A673 (cell line): ENCODE measurements at regions of chr13 and their contacts with region 1.

Region 1: GRCh38 chr13:33679658-33680012 is 138.3 kb upstream of the RFC3 start:
- DNase-seq: no peak
- H3K4me3 ChIP-seq: no peak overlapping the region
- H3K27ac ChIP-seq: no peak overlapping the region
- H3K4me1 ChIP-seq: no peaks in the 10 kb centered on the region
- H3K27me3 ChIP-seq: no peaks in the 10 kb centered on the region
- CTCF ChIP-seq: no peak

Region 2: GRCh38 chr13:32548837-32549236 is 1130.8 kb before region 1 on chr13:
- CTCF ChIA-PET with region 1: no interaction called
- POLR2A ChIA-PET with region 1: interaction called, 14 read pairs
- intact Hi-C with region 1: no loop called
- DNase-seq: no peak
- H3K4me3 ChIP-seq: no peak overlapping the region
- H3K27ac ChIP-seq: no peak overlapping the region
- H3K4me1 ChIP-seq: no peaks in the 10 kb centered on the region
- H3K27me3 ChIP-seq: no peaks in the 10 kb centered on the region
- CTCF ChIP-seq: no peak

Region 3: DNA sequence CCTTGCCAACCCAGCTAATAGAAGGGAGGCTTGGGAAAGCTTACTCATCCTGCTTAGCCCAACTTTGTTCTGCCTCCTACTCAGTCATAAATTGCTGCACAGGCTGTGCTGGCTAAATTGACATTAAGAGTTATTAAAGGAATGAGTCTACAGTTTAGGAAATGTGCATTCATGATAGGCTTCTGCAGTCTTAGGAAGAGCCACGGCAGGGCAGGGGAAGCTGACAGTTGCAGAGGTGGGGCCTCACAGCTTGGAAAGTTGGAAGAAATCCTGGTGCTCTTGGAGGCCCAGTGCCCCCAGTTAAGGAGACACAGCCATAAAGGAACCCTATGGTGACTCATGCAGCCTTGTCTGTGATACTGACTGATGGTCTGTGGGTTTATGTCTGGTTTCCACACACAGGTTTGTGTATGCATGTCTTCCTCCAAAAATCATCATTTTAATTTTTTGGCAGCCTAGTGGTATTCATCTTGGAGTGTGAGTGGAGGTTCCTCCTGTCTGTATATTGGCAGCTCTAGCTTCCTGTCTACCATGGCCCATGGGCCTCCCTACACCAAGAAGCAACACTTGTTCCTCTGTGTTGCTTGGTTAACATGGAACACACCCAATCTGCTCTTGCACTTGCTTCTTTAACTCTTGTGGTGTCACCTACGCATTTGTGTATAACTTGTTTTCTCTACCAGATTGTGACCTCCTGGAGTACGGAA is 798.4 kb before region 1 on chr13:
- CTCF ChIA-PET with region 1: no interaction called
- POLR2A ChIA-PET with region 1: interaction called, 10 read pairs
- intact Hi-C with region 1: no loop called
- DNase-seq: peak; percentile 67
- H3K4me3 ChIP-seq: no peak overlapping the region
- H3K27ac ChIP-seq: peak overlapping the region; percentile 45
- H3K4me1 ChIP-seq: peaks cover 40% of the 10 kb centered on the region
- H3K27me3 ChIP-seq: no peaks in the 10 kb centered on the region
- CTCF ChIP-seq: no peak

Region 4: DNA sequence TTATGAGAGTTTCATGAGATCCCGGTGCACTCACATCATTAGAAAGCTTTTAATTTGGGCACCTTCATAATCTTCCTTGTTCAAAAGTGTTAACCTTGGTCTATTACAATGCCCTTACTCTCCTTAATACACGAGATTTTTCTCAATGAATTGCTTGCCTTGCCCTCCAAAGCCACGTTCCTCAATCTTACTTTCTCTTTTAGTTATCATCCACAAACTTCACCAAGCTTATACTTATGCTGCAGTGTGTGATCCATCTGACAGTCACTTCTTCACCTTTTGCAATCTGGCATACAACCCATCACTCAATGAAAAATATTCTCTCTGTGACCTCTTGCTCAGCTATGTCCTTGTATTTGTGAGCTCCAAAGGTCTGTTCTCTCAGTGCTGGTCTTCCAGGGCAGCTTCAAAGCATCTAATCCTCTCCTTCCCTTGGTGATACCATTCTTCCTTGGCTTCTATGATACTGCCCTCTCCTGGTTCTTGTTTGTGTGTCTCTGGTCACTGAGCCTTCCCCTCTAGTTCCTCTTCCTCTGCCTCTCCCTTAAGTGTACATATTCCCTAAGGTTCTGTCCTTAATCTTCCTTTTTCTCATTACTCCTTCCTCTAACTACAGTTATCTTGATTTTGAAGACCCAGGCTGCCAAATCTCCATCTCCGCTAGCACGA is 191.9 kb before region 1 on chr13:
- CTCF ChIA-PET with region 1: no interaction called
- POLR2A ChIA-PET with region 1: no interaction called
- intact Hi-C with region 1: no loop called
- DNase-seq: peak; percentile 71
- H3K4me3 ChIP-seq: no peak overlapping the region
- H3K27ac ChIP-seq: no peak overlapping the region
- H3K4me1 ChIP-seq: peaks cover 33% of the 10 kb centered on the region
- H3K27me3 ChIP-seq: no peaks in the 10 kb centered on the region
- CTCF ChIP-seq: peak; percentile 62